A673 (cell line): ENCODE measurements at regions of chr17 and their contacts with region 1.

Region 1: GRCh38 chr17:32265192-32265923 is at the start of gene RHBDL3:
- DNase-seq: no peak
- H3K4me3 ChIP-seq: peak within 1 kb of the TSS; percentile 43
- H3K27ac ChIP-seq: no peak within 1 kb of the TSS
- H3K4me1 ChIP-seq: no peaks in the 10 kb centered on the region
- H3K27me3 ChIP-seq: peaks cover 10% of the 10 kb centered on the region
- CTCF ChIP-seq: no peak
- total RNA-seq, gene RHBDL3: 0.80 and 0.90 TPM in 2 replicates

Region 2: GRCh38 chr17:32020943-32021614 is 244.3 kb before region 1 on chr17:
- CTCF ChIA-PET with region 1: no interaction called
- POLR2A ChIA-PET with region 1: no interaction called
- intact Hi-C with region 1: no loop called
- DNase-seq: no peak
- H3K4me3 ChIP-seq: no peak overlapping the region
- H3K27ac ChIP-seq: no peak overlapping the region
- H3K4me1 ChIP-seq: no peaks in the 10 kb centered on the region
- H3K27me3 ChIP-seq: no peaks in the 10 kb centered on the region
- CTCF ChIP-seq: no peak

Region 3: DNA sequence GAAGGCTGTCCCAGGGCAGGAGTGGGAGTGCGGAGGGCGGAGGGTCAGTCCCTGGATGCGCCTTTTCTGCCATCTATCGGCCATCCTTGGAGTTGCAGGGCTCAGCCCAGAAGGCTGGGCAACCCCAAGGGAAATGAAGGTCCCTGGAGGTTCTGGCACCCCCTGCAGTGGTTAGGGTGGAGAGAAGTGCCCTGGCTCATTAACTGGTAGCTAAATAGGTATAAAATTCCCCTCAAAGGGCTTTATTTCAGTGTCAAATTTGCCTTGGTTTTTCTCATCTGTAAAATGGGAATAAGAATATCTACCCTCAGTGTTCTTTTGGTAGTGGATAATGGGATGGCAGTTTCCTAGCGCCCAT is 54.2 kb after region 1 on chr17:
- CTCF ChIA-PET with region 1: no interaction called
- POLR2A ChIA-PET with region 1: no interaction called
- intact Hi-C with region 1: loop called (anchors 2 kb)
- DNase-seq: peak; percentile 66
- H3K4me3 ChIP-seq: no peak overlapping the region
- H3K27ac ChIP-seq: no peak overlapping the region
- H3K4me1 ChIP-seq: no peaks in the 10 kb centered on the region
- H3K27me3 ChIP-seq: no peaks in the 10 kb centered on the region
- CTCF ChIP-seq: peak; percentile 73

Region 4: DNA sequence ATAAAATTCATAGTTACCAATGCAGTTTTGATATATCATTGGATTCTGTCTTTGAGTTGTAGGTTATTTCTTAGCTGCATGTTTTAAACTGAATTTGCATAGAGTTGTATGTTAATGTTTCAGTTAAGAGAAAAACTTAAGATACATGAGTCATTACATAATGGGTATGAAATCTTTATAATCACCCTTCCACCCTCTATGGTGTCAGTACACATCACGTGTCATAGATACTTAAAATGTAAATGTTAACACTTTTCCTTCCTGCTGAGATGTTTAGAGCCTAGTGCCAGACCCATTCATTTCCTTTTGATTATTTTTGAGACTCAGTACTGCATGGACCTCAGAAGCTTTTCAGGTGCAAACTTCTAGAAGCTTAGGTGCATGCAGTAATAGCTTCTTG is 105.1 kb after region 1 on chr17:
- CTCF ChIA-PET with region 1: interaction called, 11 read pairs
- POLR2A ChIA-PET with region 1: no interaction called
- intact Hi-C with region 1: no loop called
- DNase-seq: peak; percentile 22
- H3K4me3 ChIP-seq: no peak overlapping the region
- H3K27ac ChIP-seq: no peak overlapping the region
- H3K4me1 ChIP-seq: no peaks in the 10 kb centered on the region
- H3K27me3 ChIP-seq: no peaks in the 10 kb centered on the region
- CTCF ChIP-seq: no peak

Region 5: DNA sequence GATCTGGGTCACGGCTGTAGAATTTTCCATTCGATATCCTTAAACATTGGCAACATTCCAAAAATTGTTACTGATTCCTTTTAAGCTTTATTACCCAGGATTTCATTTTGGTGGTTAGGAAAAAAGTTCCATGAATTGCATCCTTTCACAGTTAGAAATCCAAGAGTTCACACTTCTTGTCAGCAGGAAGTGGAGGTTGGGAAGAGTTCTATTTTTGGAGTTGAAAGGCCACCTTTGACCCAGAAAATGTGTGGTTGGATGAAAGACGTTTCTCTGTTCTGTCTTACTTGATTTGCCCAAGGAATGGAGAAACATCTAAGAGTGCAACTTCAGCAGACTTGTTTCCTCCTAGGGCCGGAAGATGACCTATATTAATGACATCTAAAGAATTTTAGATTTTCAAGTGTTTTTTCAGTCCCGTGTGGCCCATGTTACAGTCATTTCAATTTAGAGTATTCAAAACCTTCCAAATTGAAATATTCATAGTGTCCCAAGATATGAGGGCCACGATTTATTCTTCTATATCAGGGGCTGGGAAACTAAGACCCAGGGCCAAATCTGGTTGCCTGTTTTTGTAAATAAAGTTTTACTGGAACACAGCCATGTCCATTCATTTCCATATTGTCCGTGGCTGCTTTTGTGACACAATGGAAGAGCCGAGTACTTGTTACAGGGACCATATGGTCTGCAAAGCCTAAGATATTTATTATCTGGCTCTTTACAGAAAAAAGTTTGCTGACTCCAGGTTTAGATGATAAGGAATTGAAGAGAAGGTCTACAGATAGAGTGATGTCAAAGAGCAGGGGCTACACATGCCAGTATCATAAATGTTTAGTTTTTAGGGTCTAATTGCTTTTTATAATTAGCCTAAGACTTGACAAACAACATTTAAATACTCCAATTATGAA is 271.6 kb after region 1 on chr17:
- CTCF ChIA-PET with region 1: no interaction called
- POLR2A ChIA-PET with region 1: no interaction called
- intact Hi-C with region 1: no loop called
- DNase-seq: no peak
- H3K4me3 ChIP-seq: no peak overlapping the region
- H3K27ac ChIP-seq: no peak overlapping the region
- H3K4me1 ChIP-seq: no peaks in the 10 kb centered on the region
- H3K27me3 ChIP-seq: no peaks in the 10 kb centered on the region
- CTCF ChIP-seq: no peak